ENCODE measurements at regions of chr12 and their contacts with region 1.

Region 1: DNA sequence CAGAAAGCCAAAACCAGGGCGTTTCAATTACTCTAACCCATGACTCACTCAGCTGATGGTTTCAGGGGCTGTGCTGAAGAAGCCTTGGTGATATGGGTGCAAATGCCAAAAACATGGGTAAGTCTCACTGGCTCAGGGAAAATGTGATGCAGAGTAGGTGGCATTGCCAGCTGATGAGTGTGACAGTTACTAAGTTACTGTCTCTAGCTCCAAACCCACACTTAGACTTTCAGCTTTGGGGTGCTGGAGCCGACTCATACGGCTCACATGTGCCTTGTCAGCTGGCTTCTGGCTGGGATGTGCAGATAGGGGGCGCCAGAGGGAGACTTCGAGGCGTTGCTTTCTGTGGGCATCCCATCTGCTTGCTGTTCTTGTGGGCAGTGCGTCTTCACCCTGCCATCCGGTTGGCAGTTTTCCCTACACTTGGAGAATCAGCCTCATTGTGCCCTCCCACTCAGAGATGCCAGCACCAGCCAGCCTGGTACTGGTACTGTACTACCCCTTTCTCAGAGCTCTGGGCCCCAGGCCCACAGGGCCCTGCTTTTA is 11.1 kb upstream of the KRT7 start:
- DNase-seq: no peak
- CTCF ChIP-seq: no peak

Region 2: DNA sequence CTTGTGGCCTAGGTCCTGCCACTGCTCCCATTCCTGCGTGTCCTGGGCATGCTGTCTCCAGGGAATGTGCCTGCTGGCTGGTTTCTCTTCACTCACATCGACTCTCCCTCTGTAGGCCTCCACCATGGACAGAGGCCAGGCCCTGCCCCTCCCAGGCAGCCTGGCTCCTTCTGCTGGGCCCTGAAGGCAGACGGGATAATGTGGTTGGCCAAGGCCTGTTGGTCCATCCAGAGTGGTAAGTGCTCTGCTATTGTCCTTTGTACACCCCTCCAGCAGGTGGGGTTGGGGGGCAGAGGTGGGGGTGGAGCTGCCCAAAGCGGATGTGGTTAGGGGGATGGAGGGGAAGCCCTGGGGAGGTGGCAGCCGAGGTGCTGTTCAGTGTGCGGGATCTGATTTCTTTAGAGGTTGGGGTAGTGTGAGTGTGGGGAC is 180.3 kb before region 1 on chr12:
- CTCF ChIA-PET with region 1: no interaction called
- POLR2A ChIA-PET with region 1: no interaction called
- DNase-seq: peak; percentile 65
- CTCF ChIP-seq: peak; percentile 34

Region 3: GRCh38 chr12:52207895-52208294 is 14.1 kb before region 1 on chr12:
- CTCF ChIA-PET with region 1: interaction called, 48 read pairs
- POLR2A ChIA-PET with region 1: no interaction called
- DNase-seq: no peak
- CTCF ChIP-seq: no peak

Region 4: GRCh38 chr12:52235822-52236692 is 14.1 kb after region 1 on chr12:
- CTCF ChIA-PET with region 1: interaction called, 12 read pairs
- POLR2A ChIA-PET with region 1: no interaction called
- DNase-seq: no peak
- CTCF ChIP-seq: no peak

Region 5: DNA sequence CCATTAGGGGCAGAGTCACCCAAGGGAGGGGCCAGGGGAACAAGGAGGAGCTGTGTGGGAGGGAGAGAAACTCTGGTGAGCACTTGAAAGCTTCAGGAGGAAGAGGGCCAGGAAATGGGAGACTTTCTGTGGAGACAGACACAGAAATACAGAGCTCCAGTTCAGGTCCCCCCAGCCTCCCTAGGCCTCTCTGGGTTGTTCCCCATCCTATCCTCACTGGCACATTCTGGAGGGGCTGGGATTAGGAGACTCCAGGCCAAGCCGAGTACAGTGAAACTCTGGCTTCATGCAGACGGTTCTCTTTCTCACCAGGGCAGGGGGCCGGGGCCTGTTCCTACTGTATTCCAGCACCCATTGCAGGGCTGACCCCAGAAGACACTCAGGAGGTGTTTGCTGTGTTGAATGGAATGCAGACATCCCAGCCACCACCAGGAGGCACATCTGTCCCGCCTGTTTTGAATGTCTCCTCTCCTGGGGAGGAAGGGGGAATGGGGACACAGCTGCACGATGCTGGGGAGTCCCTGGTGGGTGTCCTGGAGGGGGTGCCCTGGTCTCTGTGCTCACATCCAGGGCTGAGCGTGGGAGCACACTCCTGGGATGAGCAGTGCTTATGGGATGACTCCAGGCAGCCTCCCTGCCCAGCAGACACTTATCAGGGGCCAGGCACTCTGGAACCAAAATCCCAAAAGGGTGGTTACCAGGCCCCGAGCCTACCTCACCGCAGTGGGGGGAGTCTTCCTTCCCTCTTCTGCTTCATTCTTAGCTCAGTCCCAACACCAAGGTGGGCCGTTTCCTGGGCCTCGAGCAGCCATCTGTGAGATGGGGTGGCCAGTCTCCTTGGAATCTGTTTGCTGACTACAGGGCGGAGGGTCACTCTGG is 169.0 kb after region 1 on chr12:
- CTCF ChIA-PET with region 1: no interaction called
- POLR2A ChIA-PET with region 1: no interaction called
- DNase-seq: no peak
- CTCF ChIP-seq: peak; percentile 15

Measured in GM10248 (cell line).